ENCODE measurements at regions of chr14 and their contacts with region 1.

Region 1: GRCh38 chr14:73295198-73295796 is 58.0 kb downstream of the PAPLN start:
- DNase-seq: no peak
- ATAC-seq: peak; percentile 23; the same call in 2 of the 3 replicates
- H3K4me3 ChIP-seq: no peak overlapping the region
- H3K27ac ChIP-seq: no peak overlapping the region
- H3K4me1 ChIP-seq: peaks cover 23% of the 10 kb centered on the region
- H3K27me3 ChIP-seq: no peaks in the 10 kb centered on the region
- CTCF ChIP-seq: peak; percentile 55 to 75 (median 58); a peak in 5 of 6 replicates
- EP300 ChIP-seq: no peak
- POLR2A ChIP-seq: no peak
- RAD21 ChIP-seq: peak; percentile 64

Region 2: GRCh38 chr14:73227812-73228781 is 67.2 kb before region 1 on chr14:
- CTCF ChIA-PET with region 1: interaction called, 28 read pairs
- POLR2A ChIA-PET with region 1: no interaction called
- RAD21 ChIA-PET with region 1: interaction called, 17 read pairs
- SMC1A ChIA-PET with region 1: interaction called, 15 read pairs
- in situ Hi-C with region 1: no loop called
- intact Hi-C with region 1: no loop called
- DNase-seq: no peak
- ATAC-seq: peak; percentile 24
- H3K4me3 ChIP-seq: no peak overlapping the region
- H3K27ac ChIP-seq: no peak overlapping the region
- H3K4me1 ChIP-seq: peaks cover 8% of the 10 kb centered on the region
- H3K27me3 ChIP-seq: no peaks in the 10 kb centered on the region
- CTCF ChIP-seq: no peak
- EP300 ChIP-seq: no peak
- POLR2A ChIP-seq: no peak
- RAD21 ChIP-seq: no peak

Region 3: DNA sequence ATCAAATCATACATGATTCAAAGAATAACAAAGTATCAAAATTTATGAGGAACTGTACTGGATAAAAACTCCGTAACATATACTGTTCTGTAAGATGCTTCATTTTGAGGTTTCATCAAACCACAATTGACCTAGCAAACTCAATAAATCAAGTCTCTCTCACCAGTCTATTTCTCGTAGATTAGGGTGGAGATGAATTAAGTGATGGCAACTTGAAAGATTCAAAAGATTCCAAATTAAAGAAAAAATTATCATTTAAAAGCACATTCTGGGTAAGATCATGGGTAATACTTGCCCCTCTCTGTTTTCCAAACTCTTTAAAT is 16.4 kb after region 1 on chr14:
- CTCF ChIA-PET with region 1: interaction called, 13 read pairs
- POLR2A ChIA-PET with region 1: interaction called, 4 read pairs
- RAD21 ChIA-PET with region 1: interaction called, 14 read pairs
- SMC1A ChIA-PET with region 1: interaction called, 20 read pairs
- in situ Hi-C with region 1: no loop called
- intact Hi-C with region 1: no loop called
- DNase-seq: no peak
- ATAC-seq: peak; percentile 39
- H3K4me3 ChIP-seq: no peak overlapping the region
- H3K27ac ChIP-seq: no peak overlapping the region
- H3K4me1 ChIP-seq: no peaks in the 10 kb centered on the region
- H3K27me3 ChIP-seq: no peaks in the 10 kb centered on the region
- CTCF ChIP-seq: no peak
- EP300 ChIP-seq: no peak
- POLR2A ChIP-seq: no peak
- RAD21 ChIP-seq: no peak

Region 4: GRCh38 chr14:73418227-73418626 is 122.9 kb after region 1 on chr14:
- CTCF ChIA-PET with region 1: interaction called, 7 read pairs
- POLR2A ChIA-PET with region 1: interaction called, 4 read pairs
- RAD21 ChIA-PET with region 1: interaction called, 20 read pairs
- SMC1A ChIA-PET with region 1: interaction called, 15 read pairs
- in situ Hi-C with region 1: no loop called
- intact Hi-C with region 1: loop called (anchors 10 kb)
- DNase-seq: no peak
- ATAC-seq: no peak
- H3K4me3 ChIP-seq: no peak overlapping the region
- H3K27ac ChIP-seq: no peak overlapping the region
- H3K4me1 ChIP-seq: peaks cover 19% of the 10 kb centered on the region
- H3K27me3 ChIP-seq: no peaks in the 10 kb centered on the region
- CTCF ChIP-seq: no peak
- EP300 ChIP-seq: no peak
- POLR2A ChIP-seq: no peak
- RAD21 ChIP-seq: no peak

Region 5: DNA sequence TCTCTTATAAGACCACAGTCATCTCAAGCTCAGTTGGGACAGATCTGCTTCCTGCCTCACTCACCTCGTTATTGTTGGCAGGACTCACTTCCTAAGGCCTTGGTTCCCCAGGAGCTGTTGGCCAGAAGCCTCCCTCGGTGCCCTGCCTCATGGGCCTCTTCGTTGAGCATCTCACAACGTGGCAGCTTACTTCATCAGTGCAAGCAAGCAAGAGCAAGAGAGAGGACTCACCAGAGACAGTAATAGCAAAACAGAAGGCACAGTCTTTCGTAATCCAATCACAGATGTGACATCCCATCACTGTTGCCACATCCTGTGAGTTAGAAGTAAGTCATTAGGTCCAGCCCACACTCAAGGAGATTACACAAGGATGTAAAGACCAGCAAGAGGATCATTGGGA is 168.1 kb after region 1 on chr14:
- CTCF ChIA-PET with region 1: interaction called, 252 read pairs
- POLR2A ChIA-PET with region 1: interaction called, 23 read pairs
- RAD21 ChIA-PET with region 1: interaction called, 591 read pairs
- SMC1A ChIA-PET with region 1: interaction called, 311 read pairs
- in situ Hi-C with region 1: loop called (anchors 5 kb)
- intact Hi-C with region 1: no loop called
- DNase-seq: no peak
- ATAC-seq: peak; percentile 2; the same call in 1 of the 3 replicates
- H3K4me3 ChIP-seq: no peak overlapping the region
- H3K27ac ChIP-seq: no peak overlapping the region
- H3K4me1 ChIP-seq: peaks cover 30% of the 10 kb centered on the region
- H3K27me3 ChIP-seq: no peaks in the 10 kb centered on the region
- CTCF ChIP-seq: no peak
- EP300 ChIP-seq: no peak
- POLR2A ChIP-seq: no peak
- RAD21 ChIP-seq: no peak

Region 6: DNA sequence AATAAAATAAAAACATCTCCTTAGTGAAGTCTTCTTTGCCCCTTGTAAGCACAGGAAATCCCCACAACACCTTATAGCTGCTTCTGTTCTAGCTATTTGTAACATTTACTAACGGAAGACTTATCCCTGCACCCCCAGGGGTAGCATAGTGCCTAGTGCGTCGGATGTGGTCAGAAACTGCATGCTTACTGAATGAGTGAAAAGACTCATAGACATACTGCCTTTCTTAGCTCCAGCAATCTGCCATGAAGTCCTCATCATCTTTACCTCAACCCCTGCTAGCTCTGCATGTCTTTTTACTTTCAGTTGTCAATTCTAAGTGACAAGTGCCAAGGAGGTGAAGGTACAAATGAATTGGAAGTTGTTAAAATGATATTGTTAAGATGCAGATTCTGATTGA is 208.4 kb after region 1 on chr14:
- CTCF ChIA-PET with region 1: interaction called, 15 read pairs
- POLR2A ChIA-PET with region 1: interaction called, 8 read pairs
- RAD21 ChIA-PET with region 1: interaction called, 6 read pairs
- SMC1A ChIA-PET with region 1: interaction called, 6 read pairs
- in situ Hi-C with region 1: no loop called
- intact Hi-C with region 1: no loop called
- DNase-seq: peak; percentile 27
- ATAC-seq: peak; percentile 59
- H3K4me3 ChIP-seq: no peak overlapping the region
- H3K27ac ChIP-seq: no peak overlapping the region
- H3K4me1 ChIP-seq: peaks cover 5% of the 10 kb centered on the region
- H3K27me3 ChIP-seq: no peaks in the 10 kb centered on the region
- CTCF ChIP-seq: no peak
- EP300 ChIP-seq: no peak
- POLR2A ChIP-seq: no peak
- RAD21 ChIP-seq: no peak